Calu3 (cell line): ENCODE measurements at regions of chr9 and their contacts with region 1.

Region 1: DNA sequence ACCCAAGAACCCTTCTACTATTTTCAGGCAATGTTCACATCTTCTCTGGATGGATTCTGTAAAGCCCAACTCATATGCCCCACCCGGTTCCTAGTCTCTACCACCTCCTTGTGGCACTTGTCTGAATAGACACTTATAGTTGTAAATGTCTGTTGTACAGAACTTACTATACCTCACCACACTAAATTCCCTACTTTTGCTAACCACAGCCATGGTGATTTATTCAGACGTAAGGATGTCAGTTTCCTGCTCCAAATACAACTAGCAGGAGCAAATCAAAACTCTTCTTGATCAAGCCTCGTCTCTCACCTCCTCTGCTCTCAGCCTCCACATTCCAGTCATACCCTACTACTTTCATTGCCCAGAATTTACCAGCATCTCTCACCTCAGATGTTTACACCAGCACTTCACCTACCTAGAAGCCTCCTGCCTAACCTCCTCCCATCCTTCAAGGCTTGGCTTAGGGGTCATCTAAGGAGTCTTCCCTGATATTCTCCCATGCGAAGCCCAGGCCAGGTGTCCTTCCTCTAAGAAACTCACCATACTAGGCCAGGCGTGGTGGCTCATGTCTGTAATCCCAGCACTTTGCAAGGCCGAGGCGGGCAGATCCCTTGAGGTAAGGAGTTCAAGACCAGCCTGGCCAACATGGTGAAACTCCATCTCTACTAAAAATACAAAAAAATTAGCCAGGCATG is 75.5 kb downstream of the MAPKAP1 start:
- DNase-seq: peak; percentile 13
- H3K4me3 Mint-ChIP-seq: no peak overlapping the region
- H3K27ac Mint-ChIP-seq: peak overlapping the region; percentile 70
- H3K4me1 Mint-ChIP-seq: peaks cover 37% of the 10 kb centered on the region
- H3K27me3 Mint-ChIP-seq: no peaks in the 10 kb centered on the region
- CTCF ChIP-seq: no peak

Region 2: DNA sequence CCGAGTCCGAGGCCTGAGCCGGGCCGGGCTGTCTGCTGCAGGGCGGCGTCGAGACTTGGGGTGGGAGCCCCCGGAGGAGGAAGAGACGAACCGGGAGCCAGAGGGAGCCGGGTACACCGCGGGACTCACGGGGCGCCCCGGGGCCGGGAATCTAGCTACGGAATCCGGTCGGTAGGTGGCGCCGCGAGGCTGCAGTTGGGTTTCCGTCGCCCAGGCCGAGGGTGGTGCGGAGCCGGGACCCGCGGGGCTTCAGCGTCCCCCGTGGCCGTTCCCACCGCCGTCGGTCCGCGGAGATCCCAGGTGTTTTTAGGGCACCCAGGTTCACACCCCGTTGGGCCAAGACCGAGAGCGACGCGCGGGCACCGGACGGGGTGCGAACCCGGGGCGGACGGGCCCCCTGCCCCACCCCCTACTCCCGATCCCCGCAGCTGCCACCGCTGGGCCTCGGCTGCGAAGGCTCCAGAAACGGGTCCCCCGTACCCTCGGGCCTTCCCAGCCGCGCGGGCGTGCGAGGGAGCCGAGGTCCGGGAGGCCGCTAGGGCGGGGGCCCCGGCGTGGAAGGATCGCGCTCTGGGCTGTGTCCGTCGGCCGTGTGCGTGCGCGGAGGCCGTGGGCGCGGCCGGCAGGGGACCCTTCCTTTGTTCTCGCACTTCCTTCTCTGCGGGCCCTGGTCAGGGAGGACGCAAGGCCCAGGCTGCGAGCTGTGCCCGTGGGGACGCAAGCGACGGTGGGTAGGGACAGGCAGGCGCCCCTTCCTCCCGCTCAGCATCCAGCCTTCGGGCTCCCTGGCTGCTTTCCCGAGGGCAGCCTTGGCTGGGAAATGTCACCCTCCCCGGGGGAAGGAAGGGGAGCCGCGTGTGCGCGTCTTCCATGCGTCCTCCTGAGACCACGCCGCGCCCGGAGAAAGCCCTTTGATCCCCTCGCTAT is 223.3 kb before region 1 on chr9:
- CTCF ChIA-PET with region 1: no interaction called
- intact Hi-C with region 1: loop called (anchors 5 kb)
- DNase-seq: peak; percentile 80
- H3K4me3 Mint-ChIP-seq: peak overlapping the region; percentile 61
- H3K27ac Mint-ChIP-seq: no peak overlapping the region
- H3K4me1 Mint-ChIP-seq: peaks cover 28% of the 10 kb centered on the region
- H3K27me3 Mint-ChIP-seq: peaks cover 32% of the 10 kb centered on the region
- CTCF ChIP-seq: peak; percentile 73

Region 3: GRCh38 chr9:125558453-125559092 is 73.0 kb before region 1 on chr9:
- CTCF ChIA-PET with region 1: no interaction called
- intact Hi-C with region 1: loop called (anchors 5 kb)
- DNase-seq: peak; percentile 51
- H3K4me3 Mint-ChIP-seq: no peak overlapping the region
- H3K27ac Mint-ChIP-seq: no peak overlapping the region
- H3K4me1 Mint-ChIP-seq: no peaks in the 10 kb centered on the region
- H3K27me3 Mint-ChIP-seq: no peaks in the 10 kb centered on the region
- CTCF ChIP-seq: peak; percentile 41